ENCODE measurements at regions of chr3 and their contacts with region 1.

Region 1: DNA sequence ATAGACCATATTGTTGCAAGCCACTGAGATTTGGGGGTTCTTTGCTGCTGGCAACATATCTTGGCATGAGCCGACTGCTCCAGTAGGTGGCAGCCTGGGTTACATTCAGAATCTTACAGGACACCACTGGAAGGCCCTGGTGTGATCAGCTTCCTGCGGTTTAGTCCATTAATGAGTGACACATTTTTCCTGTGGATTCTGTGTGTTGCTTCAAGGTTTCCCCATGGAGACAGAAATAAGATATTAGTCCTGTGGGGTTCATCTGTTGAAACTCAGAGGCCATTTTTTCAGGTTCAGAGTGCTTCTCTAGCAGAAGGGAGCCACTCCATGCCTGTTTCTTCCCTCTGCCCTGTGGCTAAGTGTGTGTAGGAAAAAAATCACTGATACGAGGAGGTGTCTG is 116.2 kb downstream of the MFSD1 start:
- DNase-seq: peak; percentile 83
- H3K4me3 ChIP-seq: no peak overlapping the region
- H3K27ac ChIP-seq: peak overlapping the region; percentile 61
- H3K4me1 ChIP-seq: peaks cover 4% of the 10 kb centered on the region
- H3K27me3 ChIP-seq: no peaks in the 10 kb centered on the region
- CTCF ChIP-seq: peak; percentile 82 to 84
- POLR2A ChIP-seq: no peak

Region 2: DNA sequence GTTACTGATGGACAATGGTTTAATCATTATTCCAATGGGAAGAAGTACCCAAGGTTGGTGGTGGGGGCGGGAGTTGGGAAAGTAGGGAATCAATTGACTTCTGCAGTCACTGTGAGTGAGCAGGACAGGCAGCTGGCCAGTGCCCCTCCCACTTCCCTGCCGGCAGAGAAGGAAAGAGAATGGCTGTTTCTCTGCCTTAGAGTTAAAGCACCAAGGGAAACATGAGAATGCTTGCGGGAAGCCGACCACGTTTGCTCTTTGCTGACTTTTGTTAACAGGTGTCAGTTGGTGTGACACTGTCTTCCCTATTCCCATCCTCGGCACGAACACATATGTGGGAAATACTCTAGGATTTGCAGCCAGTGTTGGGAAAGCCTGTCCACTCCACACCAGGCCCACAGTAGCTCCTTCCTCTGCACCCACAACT is 149.6 kb before region 1 on chr3:
- CTCF ChIA-PET with region 1: no interaction called
- POLR2A ChIA-PET with region 1: no interaction called
- dilution Hi-C with region 1: no loop called
- intact Hi-C with region 1: no loop called
- DNase-seq: peak; percentile 75
- H3K4me3 ChIP-seq: no peak overlapping the region
- H3K27ac ChIP-seq: peak overlapping the region; percentile 3
- H3K4me1 ChIP-seq: peaks cover 23% of the 10 kb centered on the region
- H3K27me3 ChIP-seq: no peaks in the 10 kb centered on the region
- CTCF ChIP-seq: no peak
- POLR2A ChIP-seq: no peak

Region 3: DNA sequence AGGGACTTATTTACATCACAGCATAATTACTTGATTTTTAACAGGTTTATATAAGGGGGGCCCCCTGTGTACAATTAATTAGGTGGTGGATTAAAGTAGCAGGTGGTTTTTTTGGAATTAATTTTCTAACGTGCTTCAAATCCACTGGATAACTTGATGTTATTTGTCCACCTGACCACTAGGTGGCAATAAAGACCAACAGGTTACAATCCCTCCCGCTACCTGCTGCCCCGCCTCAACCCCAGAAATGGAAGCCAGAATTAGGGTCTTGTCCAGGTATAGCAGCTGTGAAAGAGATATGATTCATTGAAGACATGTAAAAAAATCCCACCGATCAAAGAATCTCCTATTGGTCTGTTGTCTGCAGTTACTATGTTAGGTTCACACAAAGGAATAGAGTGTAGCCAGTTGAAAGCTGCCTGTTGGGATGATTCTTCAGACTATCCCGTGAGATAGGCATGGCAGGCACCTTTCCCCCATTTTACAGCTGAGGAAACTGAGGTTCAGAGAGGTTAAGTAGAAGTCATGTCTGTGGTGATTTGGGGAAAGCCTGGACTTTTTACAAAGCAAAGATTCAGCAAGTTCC is 72.2 kb before region 1 on chr3:
- CTCF ChIA-PET with region 1: interaction called, 12 read pairs
- POLR2A ChIA-PET with region 1: no interaction called
- dilution Hi-C with region 1: no loop called
- intact Hi-C with region 1: loop called (anchors 1 kb)
- DNase-seq: peak; percentile 30
- H3K4me3 ChIP-seq: no peak overlapping the region
- H3K27ac ChIP-seq: no peak overlapping the region
- H3K4me1 ChIP-seq: no peaks in the 10 kb centered on the region
- H3K27me3 ChIP-seq: no peaks in the 10 kb centered on the region
- CTCF ChIP-seq: peak; percentile 49 to 60
- POLR2A ChIP-seq: no peak

Region 4: GRCh38 chr3:159082519-159082918 is 164.5 kb after region 1 on chr3:
- CTCF ChIA-PET with region 1: interaction called, 3 read pairs
- POLR2A ChIA-PET with region 1: no interaction called
- dilution Hi-C with region 1: no loop called
- intact Hi-C with region 1: loop called (anchors 5 kb)
- DNase-seq: peak; percentile 61
- H3K4me3 ChIP-seq: no peak overlapping the region
- H3K27ac ChIP-seq: peak overlapping the region; percentile 52
- H3K4me1 ChIP-seq: peaks cover 10% of the 10 kb centered on the region
- H3K27me3 ChIP-seq: no peaks in the 10 kb centered on the region
- CTCF ChIP-seq: no peak
- POLR2A ChIP-seq: no peak

Region 5: GRCh38 chr3:159102001-159102400 is 184.0 kb after region 1 on chr3:
- CTCF ChIA-PET with region 1: no interaction called
- POLR2A ChIA-PET with region 1: no interaction called
- dilution Hi-C with region 1: no loop called
- intact Hi-C with region 1: no loop called
- DNase-seq: no peak
- H3K4me3 ChIP-seq: no peak overlapping the region
- H3K27ac ChIP-seq: no peak overlapping the region
- H3K4me1 ChIP-seq: no peaks in the 10 kb centered on the region
- H3K27me3 ChIP-seq: no peaks in the 10 kb centered on the region
- CTCF ChIP-seq: no peak
- POLR2A ChIP-seq: no peak

Region 6: DNA sequence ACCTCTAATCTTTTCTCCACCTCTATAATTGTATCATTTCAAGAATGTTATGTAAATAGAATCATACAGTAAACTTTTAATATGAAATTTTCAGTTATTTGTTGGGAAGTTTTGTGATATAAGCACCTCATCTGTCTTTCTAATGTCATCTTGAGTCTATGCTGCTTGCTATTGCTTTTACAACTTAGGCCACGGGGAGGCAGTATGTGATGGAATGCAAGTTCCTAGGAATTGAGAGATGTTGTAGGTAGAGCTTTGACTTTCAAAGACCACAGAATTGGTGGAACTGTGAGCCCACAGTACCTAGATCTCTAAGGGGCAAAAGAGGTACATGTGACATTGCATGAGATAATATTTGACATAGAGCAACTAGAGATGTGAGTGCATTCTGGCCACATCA is 212.1 kb after region 1 on chr3:
- CTCF ChIA-PET with region 1: no interaction called
- POLR2A ChIA-PET with region 1: no interaction called
- dilution Hi-C with region 1: no loop called
- intact Hi-C with region 1: loop called (anchors 2 kb)
- DNase-seq: no peak
- H3K4me3 ChIP-seq: no peak overlapping the region
- H3K27ac ChIP-seq: no peak overlapping the region
- H3K4me1 ChIP-seq: peaks cover 14% of the 10 kb centered on the region
- H3K27me3 ChIP-seq: no peaks in the 10 kb centered on the region
- CTCF ChIP-seq: peak in 1 of 2 donors; percentile 14
- POLR2A ChIP-seq: no peak

Region 7: DNA sequence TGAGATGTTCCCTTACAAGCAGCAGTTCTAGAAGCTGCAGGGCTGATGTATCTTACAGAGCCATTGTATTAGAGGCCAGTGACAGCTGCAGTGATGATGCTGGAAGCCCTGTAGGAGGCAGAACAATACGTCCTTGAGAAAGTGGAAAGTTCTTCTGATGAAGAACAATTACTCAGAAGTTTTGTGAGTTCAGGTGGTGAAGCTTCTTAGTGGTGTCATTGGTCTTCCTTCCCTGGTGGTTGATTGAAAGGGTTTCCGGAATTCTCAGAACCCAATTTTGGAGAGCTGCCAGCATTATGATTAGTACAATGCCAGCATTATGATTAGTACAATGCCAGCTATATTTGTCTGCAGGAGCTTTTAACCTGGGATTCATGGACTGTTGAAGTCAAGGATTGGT is 240.2 kb after region 1 on chr3:
- CTCF ChIA-PET with region 1: interaction called, 10 read pairs
- POLR2A ChIA-PET with region 1: no interaction called
- dilution Hi-C with region 1: no loop called
- intact Hi-C with region 1: loop called (anchors 1 kb)
- DNase-seq: peak; percentile 88
- H3K4me3 ChIP-seq: no peak overlapping the region
- H3K27ac ChIP-seq: peak overlapping the region; percentile 48
- H3K4me1 ChIP-seq: peaks cover 15% of the 10 kb centered on the region
- H3K27me3 ChIP-seq: no peaks in the 10 kb centered on the region
- CTCF ChIP-seq: peak; percentile 30 to 42
- POLR2A ChIP-seq: no peak

Region 8: DNA sequence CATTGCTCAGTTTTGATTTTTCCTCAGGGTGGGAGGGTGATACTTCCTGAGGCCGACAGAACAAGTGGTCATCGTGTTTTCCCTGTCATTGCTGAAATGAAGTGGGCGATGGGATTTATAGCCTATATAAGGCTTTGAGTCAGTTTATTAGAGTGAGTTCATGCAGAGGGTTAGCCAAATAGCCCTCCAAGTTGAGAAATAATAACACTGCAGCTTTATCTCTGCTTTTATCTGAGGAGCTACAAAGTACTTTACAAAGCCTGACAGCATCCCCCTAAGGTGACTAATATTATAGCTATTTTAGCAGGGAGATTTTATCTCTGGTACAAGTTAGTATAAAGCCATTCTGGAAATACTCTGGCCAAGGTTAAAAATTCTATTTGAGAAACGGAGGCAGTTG is 273.4 kb after region 1 on chr3:
- CTCF ChIA-PET with region 1: interaction called, 15 read pairs
- POLR2A ChIA-PET with region 1: interaction called, 3 read pairs
- dilution Hi-C with region 1: no loop called
- intact Hi-C with region 1: loop called (anchors 1 kb)
- DNase-seq: peak; percentile 89
- H3K4me3 ChIP-seq: no peak overlapping the region
- H3K27ac ChIP-seq: peak overlapping the region; percentile 52
- H3K4me1 ChIP-seq: peaks cover 28% of the 10 kb centered on the region
- H3K27me3 ChIP-seq: no peaks in the 10 kb centered on the region
- CTCF ChIP-seq: no peak
- POLR2A ChIP-seq: no peak